OCI-LY7 (cell line): ENCODE measurements at regions of chr5 and their contacts with region 1.

Region 1: DNA sequence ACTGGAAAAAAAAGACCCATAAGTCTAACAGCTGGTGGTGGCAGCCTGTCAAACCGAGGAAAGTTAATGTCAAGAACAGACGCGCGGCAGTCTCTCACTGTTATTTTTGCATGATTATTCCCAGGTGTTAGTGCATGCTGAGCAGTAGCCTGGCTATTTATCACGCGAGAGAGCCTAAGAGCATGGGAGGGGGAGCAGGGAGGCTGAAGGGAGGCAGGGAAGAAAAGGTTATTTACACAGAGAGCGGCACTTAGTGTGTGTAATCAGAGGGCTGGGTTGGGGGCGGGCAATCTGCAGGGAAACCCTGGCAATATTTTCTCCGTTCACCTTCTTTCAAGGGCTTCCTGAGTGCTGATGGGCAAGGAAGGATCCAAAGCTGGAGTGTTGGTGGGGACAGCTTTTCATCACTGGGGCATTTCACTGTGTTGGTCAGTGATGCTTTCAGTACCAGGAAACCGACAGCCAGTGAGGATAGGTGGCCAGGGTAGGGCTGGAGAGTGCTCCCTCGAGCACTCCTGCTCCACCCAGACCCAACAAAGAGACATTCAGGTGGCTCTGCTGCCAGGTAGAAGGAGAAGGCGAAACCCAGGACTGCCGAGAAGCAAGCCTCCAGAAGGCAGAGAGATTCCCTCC is 39.6 kb downstream of the ZNF608 start:
- DNase-seq: peak; percentile 53
- H3K4me3 ChIP-seq: peak overlapping the region; percentile 66
- H3K27ac ChIP-seq: peak overlapping the region; percentile 95
- H3K4me1 ChIP-seq: peaks cover 95% of the 10 kb centered on the region
- CTCF ChIP-seq: no peak

Region 2: GRCh38 chr5:124655922-124656511 is 50.8 kb before region 1 on chr5:
- CTCF ChIA-PET with region 1: interaction called, 6 read pairs
- POLR2A ChIA-PET with region 1: interaction called, 20 read pairs
- intact Hi-C with region 1: loop called (anchors 1 kb)
- DNase-seq: peak; percentile 75
- H3K4me3 ChIP-seq: peak overlapping the region; percentile 59
- H3K27ac ChIP-seq: peak overlapping the region; percentile 73
- H3K4me1 ChIP-seq: peaks cover 99% of the 10 kb centered on the region
- CTCF ChIP-seq: no peak

Region 3: GRCh38 chr5:124692324-124692723 is 14.5 kb before region 1 on chr5:
- CTCF ChIA-PET with region 1: no interaction called
- POLR2A ChIA-PET with region 1: interaction called, 10 read pairs
- intact Hi-C with region 1: no loop called
- DNase-seq: no peak
- H3K4me3 ChIP-seq: no peak overlapping the region
- H3K27ac ChIP-seq: no peak overlapping the region
- H3K4me1 ChIP-seq: peaks cover 15% of the 10 kb centered on the region
- CTCF ChIP-seq: no peak

Region 4: DNA sequence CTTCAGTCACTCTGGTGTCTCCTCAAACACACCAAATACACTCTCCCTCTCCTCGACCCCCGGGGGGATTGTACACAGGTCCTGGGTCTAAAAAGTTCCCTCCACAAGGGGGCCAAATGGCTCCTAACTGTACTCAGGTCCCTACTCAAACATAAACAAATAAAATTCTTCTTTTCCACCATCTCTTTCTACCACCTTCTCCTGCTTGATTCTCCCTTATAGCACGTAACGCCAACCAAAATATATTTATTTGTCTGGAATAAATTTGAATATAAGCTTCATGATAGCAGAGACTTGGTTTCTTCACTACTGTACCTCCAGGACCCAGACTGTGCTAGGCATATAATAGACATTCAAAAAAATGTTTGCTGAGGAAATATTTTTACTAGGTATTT is 18.2 kb after region 1 on chr5:
- CTCF ChIA-PET with region 1: interaction called, 4 read pairs
- POLR2A ChIA-PET with region 1: interaction called, 112 read pairs
- intact Hi-C with region 1: no loop called
- DNase-seq: peak; percentile 83
- H3K4me3 ChIP-seq: peak overlapping the region; percentile 71
- H3K27ac ChIP-seq: peak overlapping the region; percentile 65
- H3K4me1 ChIP-seq: peaks cover 86% of the 10 kb centered on the region
- CTCF ChIP-seq: peak; percentile 85

Region 5: GRCh38 chr5:126600631-126601511 is 1894.0 kb after region 1 on chr5 and contains the start of gene PHAX:
- CTCF ChIA-PET with region 1: no interaction called
- POLR2A ChIA-PET with region 1: no interaction called
- intact Hi-C with region 1: loop called (anchors 5 kb)
- DNase-seq: peak; percentile 90
- H3K4me3 ChIP-seq: peak within 1 kb of the TSS; percentile 86
- H3K27ac ChIP-seq: peak within 1 kb of the TSS; percentile 97
- H3K4me1 ChIP-seq: peaks cover 36% of the 10 kb centered on the region
- CTCF ChIP-seq: peak; percentile 82
- total RNA-seq, gene PHAX: 73.8 and 89.7 TPM in 2 replicates